IMR-90 (cell line): ENCODE measurements at regions of chr6 and their contacts with region 1.

Region 1: DNA sequence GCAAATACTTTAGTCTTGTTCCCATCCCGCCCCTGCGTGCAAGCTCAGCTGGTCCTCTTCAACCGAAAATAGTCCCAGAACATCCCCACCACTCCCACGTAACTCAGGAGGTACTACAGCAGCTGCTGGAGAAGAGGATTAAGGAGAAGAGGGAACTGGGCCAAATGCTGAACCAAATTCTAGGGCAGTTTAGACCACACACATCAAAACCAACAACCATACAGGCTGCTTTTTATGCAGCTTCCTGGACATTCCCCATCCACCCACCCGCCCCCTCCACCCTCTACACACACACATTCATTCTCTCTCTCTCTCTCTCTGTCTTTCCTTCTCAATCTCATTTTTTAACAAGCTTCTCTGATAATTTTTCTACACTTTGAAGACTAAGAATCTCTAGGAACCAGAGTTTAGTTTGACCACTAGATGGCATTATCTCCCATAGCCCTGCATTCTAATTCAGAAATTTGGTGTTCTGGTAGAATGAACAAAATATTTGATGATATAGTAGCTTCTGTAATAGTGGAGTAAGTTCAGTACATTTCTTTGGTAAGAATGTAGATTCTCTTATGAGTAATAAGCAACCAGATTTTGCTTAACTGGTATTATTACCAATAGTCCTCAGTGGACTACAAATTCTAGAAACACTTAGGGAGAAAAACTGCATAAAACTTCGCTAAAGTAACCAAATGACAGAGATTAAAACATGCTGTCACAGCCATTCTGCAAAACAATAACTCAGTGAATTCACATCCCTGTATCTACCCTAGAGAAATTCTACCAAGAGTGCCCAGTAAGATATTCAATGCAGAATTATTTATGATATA is 52.1 kb upstream of the BEND6 start:
- DNase-seq: peak; percentile 76
- ATAC-seq: peak; percentile 48
- H3K4me3 ChIP-seq: no peak overlapping the region
- H3K27ac ChIP-seq: peak overlapping the region; percentile 58
- H3K4me1 ChIP-seq: peaks cover 19% of the 10 kb centered on the region
- H3K27me3 ChIP-seq: no peaks in the 10 kb centered on the region
- CTCF ChIP-seq: peak; percentile 78
- POLR2A ChIP-seq: no peak
- RAD21 ChIP-seq: peak; percentile 77

Region 2: GRCh38 chr6:56914798-56915658 is 12.2 kb after region 1 on chr6:
- CTCF ChIA-PET with region 1: interaction called, 13 read pairs
- POLR2A ChIA-PET with region 1: no interaction called
- dilution Hi-C with region 1: no loop called
- in situ Hi-C with region 1: no loop called
- intact Hi-C with region 1: no loop called
- DNase-seq: no peak
- ATAC-seq: no peak
- H3K4me3 ChIP-seq: no peak overlapping the region
- H3K27ac ChIP-seq: no peak overlapping the region
- H3K4me1 ChIP-seq: peaks cover 11% of the 10 kb centered on the region
- H3K27me3 ChIP-seq: no peaks in the 10 kb centered on the region
- CTCF ChIP-seq: no peak
- POLR2A ChIP-seq: no peak
- RAD21 ChIP-seq: no peak

Region 3: GRCh38 chr6:57021086-57021720 is 118.3 kb after region 1 on chr6:
- CTCF ChIA-PET with region 1: interaction called, 3 read pairs
- POLR2A ChIA-PET with region 1: no interaction called
- dilution Hi-C with region 1: no loop called
- in situ Hi-C with region 1: no loop called
- intact Hi-C with region 1: loop called (anchors 1 kb)
- DNase-seq: peak; percentile 64
- ATAC-seq: peak; percentile 91
- H3K4me3 ChIP-seq: no peak overlapping the region
- H3K27ac ChIP-seq: no peak overlapping the region
- H3K4me1 ChIP-seq: no peaks in the 10 kb centered on the region
- H3K27me3 ChIP-seq: no peaks in the 10 kb centered on the region
- CTCF ChIP-seq: peak; percentile 58
- POLR2A ChIP-seq: no peak
- RAD21 ChIP-seq: peak; percentile 50

Region 4: DNA sequence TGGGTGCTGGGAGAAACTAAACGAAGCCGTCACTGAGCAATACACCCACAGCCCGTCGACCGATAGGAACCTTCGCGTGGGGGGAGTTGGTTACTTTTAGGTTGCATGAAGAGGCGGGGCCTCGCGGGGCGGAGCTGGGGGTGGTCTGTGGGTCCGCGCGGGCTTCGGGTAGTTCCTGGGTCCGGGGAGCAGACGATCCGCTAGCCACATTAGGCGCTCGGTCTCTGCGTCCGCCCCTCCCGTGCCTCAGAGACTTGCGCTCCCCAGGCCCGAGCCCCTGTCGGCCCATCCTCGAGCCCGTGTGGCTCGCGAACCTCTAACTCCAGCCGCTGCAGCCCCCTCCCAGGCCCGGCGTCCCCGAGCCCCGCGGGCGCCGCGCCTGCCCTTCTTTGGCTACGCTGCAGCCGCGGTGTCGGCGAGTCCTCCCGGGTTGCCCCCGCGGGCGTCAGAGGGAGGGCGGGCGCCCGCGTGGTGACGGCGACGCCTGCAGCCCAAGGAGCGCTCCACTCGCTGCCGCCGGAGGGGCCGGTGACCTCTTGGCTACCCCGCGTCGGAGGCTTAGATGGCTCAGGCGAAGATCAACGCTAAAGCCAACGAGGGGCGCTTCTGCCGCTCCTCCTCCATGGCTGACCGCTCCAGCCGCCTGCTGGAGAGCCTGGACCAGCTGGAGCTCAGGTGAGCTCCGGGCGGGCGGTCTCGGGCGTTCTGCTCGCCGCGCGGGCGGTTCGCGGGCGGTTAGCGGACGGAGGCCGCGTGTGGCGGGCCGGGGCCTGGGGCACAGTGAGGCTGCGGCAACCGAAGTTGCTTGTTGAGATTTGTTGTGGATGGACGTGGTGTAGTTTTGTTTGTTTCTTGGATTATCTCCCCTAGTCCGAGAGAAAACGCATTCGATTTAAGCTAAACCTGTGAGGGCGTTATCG is 269.5 kb after region 1 on chr6 and contains the start of gene BAG2:
- CTCF ChIA-PET with region 1: no interaction called
- POLR2A ChIA-PET with region 1: no interaction called
- dilution Hi-C with region 1: no loop called
- in situ Hi-C with region 1: no loop called
- intact Hi-C with region 1: loop called (anchors 5 kb)
- DNase-seq: peak; percentile 90
- ATAC-seq: peak; percentile 89
- H3K4me3 ChIP-seq: peak within 1 kb of the TSS; percentile 97
- H3K27ac ChIP-seq: peak within 1 kb of the TSS; percentile 98
- H3K4me1 ChIP-seq: peaks cover 9% of the 10 kb centered on the region
- H3K27me3 ChIP-seq: no peaks in the 10 kb centered on the region
- CTCF ChIP-seq: no peak
- POLR2A ChIP-seq: peak; percentile 85
- RAD21 ChIP-seq: no peak
- total RNA-seq, gene BAG2: 10.0 and 19.2 TPM in 2 replicates